ENCODE measurements at regions of chr4 and their contacts with region 1.

Region 1: DNA sequence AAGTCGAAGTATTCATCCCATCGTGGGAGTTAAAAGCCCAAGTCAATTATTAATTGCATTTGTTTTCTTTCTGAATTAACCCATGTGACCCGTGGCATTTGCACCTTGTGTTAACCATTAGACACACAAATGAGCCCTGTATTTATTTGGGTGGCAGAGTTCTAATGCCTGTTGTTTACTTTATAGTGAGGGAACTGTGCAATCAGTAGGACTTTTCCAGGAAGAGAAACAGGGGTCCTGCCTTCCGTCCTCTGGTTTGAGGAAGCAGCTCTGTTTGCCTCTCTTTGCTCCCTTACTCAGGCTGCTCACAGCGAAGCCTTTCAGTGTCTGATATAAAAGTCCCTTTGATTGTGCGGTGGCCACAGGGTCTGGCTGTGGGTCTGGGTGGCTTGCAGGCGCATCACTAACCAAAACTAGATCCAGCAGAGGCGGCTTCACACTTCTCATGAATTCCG is 263.6 kb downstream of the PTTG2 start:
- DNase-seq: no peak
- H3K4me3 ChIP-seq: no peak overlapping the region
- H3K27ac ChIP-seq: no peak overlapping the region
- H3K4me1 ChIP-seq: no peaks in the 10 kb centered on the region
- H3K27me3 ChIP-seq: no peaks in the 10 kb centered on the region
- CTCF ChIP-seq: no peak
- POLR2A ChIP-seq: no peak

Region 2: GRCh38 chr4:38119668-38120385 is 104.0 kb before region 1 on chr4:
- intact Hi-C with region 1: no loop called
- DNase-seq: no peak
- H3K4me3 ChIP-seq: no peak overlapping the region
- H3K27ac ChIP-seq: peak overlapping the region; percentile 58 to 79
- H3K4me1 ChIP-seq: peaks cover 0 to 19% of the 10 kb centered on the region in 2 donors
- H3K27me3 ChIP-seq: no peaks in the 10 kb centered on the region
- CTCF ChIP-seq: no peak
- POLR2A ChIP-seq: no peak

Region 3: DNA sequence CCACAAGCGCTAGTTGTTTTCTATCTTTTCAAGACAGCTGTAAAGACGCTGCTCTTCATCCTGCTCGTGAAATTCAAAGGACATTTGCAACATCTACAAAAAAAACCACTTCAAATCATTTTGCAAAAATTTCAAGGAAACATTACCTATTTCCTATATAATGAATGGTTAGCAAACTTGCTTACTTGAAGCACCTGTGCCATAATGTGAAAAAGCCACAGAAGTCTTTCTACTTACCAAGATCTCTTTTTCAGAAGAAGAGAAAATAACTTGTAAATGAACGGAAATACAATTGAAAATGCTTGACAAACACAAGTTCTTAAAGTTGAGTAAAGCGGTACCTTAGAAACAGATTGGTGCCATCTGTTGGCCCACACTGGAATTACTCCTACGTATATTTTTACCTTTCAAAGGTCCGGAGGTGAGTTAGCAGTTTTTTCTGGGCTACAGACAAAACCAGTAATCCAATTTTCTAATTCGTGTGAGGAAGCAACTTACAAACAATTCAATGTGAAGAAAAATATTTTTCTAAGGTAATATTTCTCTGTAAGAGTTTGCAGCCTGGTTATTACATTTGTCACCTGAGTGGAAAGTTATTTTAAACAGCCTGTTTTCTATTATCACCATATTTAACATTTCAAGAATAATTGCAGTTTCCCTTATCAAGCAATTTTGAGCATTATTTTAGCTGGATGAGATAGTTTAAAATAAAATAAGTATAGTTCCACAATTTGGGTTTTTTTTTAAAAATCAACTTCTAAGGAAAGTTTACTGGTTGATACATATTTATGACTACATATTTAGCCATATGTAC is 632.9 kb after region 1 on chr4 and contains the start of gene TLR6:
- intact Hi-C with region 1: loop called (anchors 10 kb)
- DNase-seq: peak in 1 of 2 donors; percentile 59
- H3K4me3 ChIP-seq: peak within 1 kb of the TSS in 1 of 2 donors; percentile 20
- H3K27ac ChIP-seq: peak within 1 kb of the TSS; percentile 44 to 84
- H3K4me1 ChIP-seq: peaks cover 0 to 12% of the 10 kb centered on the region in 2 donors
- H3K27me3 ChIP-seq: no peaks in the 10 kb centered on the region
- CTCF ChIP-seq: peak; percentile 52 to 77 (median 70)
- POLR2A ChIP-seq: peak in 1 of 2 donors; percentile 10
- total RNA-seq, gene TLR6: 1.5 to 10.0 (median 4.4) TPM